ENCODE measurements at regions of chr4 and their contacts with region 1.

Region 1: DNA sequence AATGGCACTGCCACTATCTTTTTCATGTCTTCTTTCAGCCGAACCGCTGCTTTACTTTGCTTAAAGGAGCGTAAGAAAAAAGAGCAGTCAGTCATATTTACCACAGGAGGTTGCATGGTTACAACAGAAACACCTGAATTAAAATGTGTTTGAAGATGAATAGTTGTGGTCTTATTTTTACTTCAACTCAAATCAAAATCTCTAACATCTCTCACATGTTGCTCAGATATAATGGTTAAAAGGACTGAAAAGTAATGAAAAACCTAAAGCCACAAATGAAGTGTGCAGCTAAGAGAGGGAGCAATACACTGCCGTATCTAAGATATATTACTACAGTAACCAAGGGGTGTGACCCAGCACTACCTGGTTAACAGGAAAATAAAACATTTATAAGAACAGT is 27.4 kb downstream of the FAM13A start:
- DNase-seq: no peak
- H3K4me3 ChIP-seq: no peak overlapping the region
- H3K27ac ChIP-seq: no peak overlapping the region
- H3K4me1 ChIP-seq: peaks cover 0 to 7% (median 0%) of the 10 kb centered on the region in 4 donors
- H3K27me3 ChIP-seq: no peaks in the 10 kb centered on the region
- CTCF ChIP-seq: no peak
- EP300 ChIP-seq: no peak
- POLR2A ChIP-seq: no peak

Region 2: DNA sequence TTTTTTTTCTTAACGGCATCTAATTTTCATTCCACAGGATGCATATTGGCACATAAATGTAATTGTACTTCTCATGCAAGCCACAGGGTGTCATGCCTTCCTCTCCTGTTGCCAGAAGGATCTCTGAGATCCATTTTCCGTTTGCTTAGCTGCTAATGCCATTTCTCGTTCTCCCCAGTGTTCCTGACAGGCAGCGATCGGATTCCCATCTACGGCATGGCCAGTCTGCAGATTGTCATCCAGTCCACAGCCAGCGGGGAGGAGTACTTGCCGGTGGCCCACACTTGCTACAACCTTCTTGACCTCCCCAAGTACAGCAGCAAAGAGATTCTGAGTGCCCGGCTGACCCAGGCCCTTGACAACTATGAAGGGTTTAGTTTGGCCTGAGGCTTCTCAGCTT is 323.0 kb before region 1 on chr4:
- in situ Hi-C with region 1: loop called in 2 of 4 experiments (anchors 25 kb)
- intact Hi-C with region 1: loop called (anchors 5 kb)
- DNase-seq: no peak
- H3K4me3 ChIP-seq: no peak overlapping the region
- H3K27ac ChIP-seq: peak overlapping the region in 3 of 4 donors; percentile 14 to 46 (median 35)
- H3K4me1 ChIP-seq: peaks cover 0 to 5% (median 0%) of the 10 kb centered on the region in 4 donors
- H3K27me3 ChIP-seq: no peaks in the 10 kb centered on the region
- CTCF ChIP-seq: peak; percentile 20 to 44 (median 36)
- EP300 ChIP-seq: no peak
- POLR2A ChIP-seq: no peak

Region 3: GRCh38 chr4:88823058-88823919 is 206.3 kb before region 1 on chr4:
- in situ Hi-C with region 1: loop called (anchors 5 to 25 kb)
- intact Hi-C with region 1: loop called (anchors 10 kb)
- DNase-seq: peak; percentile 90
- H3K4me3 ChIP-seq: peak overlapping the region; percentile 29 to 59 (median 44)
- H3K27ac ChIP-seq: peak overlapping the region; percentile 94 to 96 (median 96)
- H3K4me1 ChIP-seq: peaks cover 13 to 44% (median 28%) of the 10 kb centered on the region in 4 donors
- H3K27me3 ChIP-seq: no peaks in the 10 kb centered on the region
- CTCF ChIP-seq: no peak
- EP300 ChIP-seq: peak; percentile 34
- POLR2A ChIP-seq: peak; percentile 94

Measured in transverse colon (tissue), 4 donors.